ENCODE measurements at regions of chr11 and their contacts with region 1.

Region 1: DNA sequence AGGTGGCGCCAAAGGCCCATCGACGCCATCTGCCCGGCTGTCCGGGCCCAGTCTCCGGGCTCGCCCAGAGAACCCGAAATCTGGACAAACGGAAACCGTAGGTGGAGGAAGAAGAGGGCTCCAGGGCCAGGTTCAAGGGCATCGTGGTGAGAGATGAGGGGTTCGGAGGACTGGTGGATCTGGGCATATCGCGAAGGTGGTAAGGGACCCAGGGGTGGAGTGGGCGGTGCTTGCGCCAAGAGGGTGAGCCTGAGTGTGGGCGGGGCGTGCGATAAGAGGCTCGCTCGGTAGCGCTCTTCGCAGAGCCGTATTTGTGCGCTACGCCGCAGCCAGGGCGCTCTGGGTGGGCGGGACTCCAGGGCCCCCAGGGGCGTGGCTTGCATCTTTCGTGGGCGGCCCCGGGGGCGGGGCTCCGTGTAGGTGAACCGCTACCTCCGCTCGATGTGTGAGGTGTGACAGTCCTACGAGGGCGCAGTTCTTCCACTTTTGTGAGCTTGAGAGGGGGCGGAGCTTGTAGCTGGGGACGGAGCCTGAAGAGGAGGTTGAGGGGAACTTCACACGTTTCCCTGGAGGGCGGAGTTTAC is 4.8 kb downstream of the CD248 start:
- DNase-seq: peak; percentile 84
- H3K4me3 ChIP-seq: peak overlapping the region; percentile 74
- H3K27ac ChIP-seq: peak overlapping the region; percentile 89
- H3K27me3 ChIP-seq: peaks cover 7% of the 10 kb centered on the region
- CTCF ChIP-seq: peak; percentile 94

Region 2: DNA sequence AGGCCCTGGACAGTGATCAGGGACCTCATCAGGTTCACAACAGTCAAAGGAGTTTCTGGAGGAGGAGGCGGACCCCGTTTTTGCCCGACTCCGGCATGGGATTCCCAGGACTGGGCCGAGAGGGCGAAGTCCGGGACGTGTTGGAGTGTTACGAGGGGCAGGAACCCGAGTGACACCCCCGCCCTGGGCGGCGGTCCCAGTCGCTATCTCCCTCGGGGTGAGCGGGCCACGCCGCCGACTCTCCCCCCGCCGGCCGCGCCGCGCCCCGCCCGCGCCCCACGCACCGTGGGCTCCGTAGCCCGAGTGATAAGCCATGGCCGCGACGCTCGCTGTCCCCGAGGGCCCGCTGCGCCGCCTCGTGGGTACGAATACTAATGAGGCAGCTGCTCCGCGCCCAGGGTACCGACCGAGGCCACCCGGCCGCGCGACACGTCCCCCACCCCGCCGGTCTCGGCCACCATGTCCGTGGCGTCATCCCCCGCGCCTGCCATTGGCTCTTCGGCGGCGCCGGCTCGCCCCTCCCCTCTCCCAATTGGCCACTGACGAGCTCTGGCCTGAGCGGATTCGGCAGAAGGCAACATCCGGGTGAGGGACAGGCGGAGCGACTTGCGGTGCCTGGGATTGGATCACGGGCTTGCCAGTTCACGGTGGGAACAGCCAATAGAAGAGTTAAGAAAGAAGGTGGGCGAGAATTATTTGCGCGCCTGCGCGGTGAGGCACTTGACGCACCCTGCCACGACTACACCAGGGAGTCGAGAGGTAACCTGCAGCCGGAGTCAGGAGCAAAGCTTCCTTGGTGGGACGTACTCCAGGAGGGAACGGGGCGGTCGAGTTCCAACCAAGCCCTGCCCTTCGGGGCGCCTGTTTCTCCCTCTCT is 23.1 kb before region 1 on chr11 and contains the start of gene YIF1A:
- CTCF ChIA-PET with region 1: interaction called, 4 read pairs
- POLR2A ChIA-PET with region 1: interaction called, 25 read pairs
- DNase-seq: peak; percentile 99
- H3K4me3 ChIP-seq: peak within 1 kb of the TSS; percentile 84
- H3K27ac ChIP-seq: peak within 1 kb of the TSS; percentile 100
- H3K27me3 ChIP-seq: peaks cover 19% of the 10 kb centered on the region
- CTCF ChIP-seq: no peak
- polyA plus RNA-seq, gene YIF1A: 126 and 140 TPM in 2 replicates

Region 3: GRCh38 chr11:66328307-66329144 is 16.5 kb after region 1 on chr11:
- CTCF ChIA-PET with region 1: interaction called, 62 read pairs
- POLR2A ChIA-PET with region 1: interaction called, 99 read pairs
- DNase-seq: no peak
- H3K4me3 ChIP-seq: no peak overlapping the region
- H3K27ac ChIP-seq: peak overlapping the region; percentile 89
- H3K27me3 ChIP-seq: no peaks in the 10 kb centered on the region
- CTCF ChIP-seq: peak; percentile 94

Region 4: DNA sequence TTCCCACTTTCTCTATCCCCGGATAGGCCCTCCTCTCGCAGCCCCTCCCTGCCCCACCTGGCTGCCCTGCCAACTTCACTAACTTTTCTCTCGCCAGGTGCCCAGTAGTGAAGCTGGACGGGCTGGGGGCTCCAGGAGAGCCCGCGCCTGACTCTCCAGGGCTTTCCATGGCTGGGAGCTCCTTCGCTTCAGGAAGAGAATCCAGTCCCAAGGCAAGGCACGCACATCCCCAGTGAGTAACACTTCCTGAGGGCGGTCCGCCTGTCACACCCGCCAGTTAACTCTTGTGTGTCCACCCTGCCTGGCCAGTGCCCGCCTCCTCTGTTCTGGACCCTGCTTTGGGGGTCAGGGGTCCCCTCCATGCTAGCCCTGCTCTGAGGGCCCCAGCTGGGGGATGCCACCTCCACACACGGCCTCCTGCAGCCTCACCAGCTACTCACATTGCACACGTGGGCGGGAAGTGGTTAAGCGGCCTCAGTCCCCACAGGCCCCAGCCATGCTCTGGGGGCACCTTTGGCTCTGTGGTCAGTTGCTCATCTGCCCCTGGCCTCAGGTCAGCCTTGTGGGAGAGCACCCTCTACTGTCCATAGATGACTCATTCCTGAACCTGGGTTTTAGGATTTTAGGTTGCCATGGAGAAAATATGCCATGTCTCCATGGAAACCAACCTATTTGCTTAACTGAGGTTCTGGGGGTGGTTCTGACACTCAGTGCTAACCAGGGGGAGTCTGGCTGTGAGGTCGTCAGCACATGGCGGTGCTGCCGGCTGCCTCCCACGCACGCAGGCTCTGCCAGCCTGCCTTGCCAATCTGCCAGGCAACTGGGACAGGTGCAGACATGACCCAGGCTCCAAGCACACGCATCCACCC is 24.4 kb after region 1 on chr11 and contains the start of gene RIN1:
- CTCF ChIA-PET with region 1: interaction called, 64 read pairs
- POLR2A ChIA-PET with region 1: interaction called, 99 read pairs
- DNase-seq: peak; percentile 97
- H3K4me3 ChIP-seq: peak within 1 kb of the TSS; percentile 85
- H3K27ac ChIP-seq: peak within 1 kb of the TSS; percentile 97
- H3K27me3 ChIP-seq: no peaks in the 10 kb centered on the region
- CTCF ChIP-seq: peak; percentile 24; the same call in 1 of the 2 replicates
- polyA plus RNA-seq, gene RIN1: 6.7 and 9.0 TPM in 2 replicates

Region 5: GRCh38 chr11:66344550-66345315 is 32.7 kb after region 1 on chr11 and contains the start of gene BRMS1:
- CTCF ChIA-PET with region 1: interaction called, 12 read pairs
- POLR2A ChIA-PET with region 1: interaction called, 5 read pairs
- DNase-seq: peak; percentile 87
- H3K4me3 ChIP-seq: peak within 1 kb of the TSS; percentile 99
- H3K27ac ChIP-seq: peak within 1 kb of the TSS; percentile 65
- H3K27me3 ChIP-seq: no peaks in the 10 kb centered on the region
- CTCF ChIP-seq: peak; percentile 13
- polyA plus RNA-seq, gene BRMS1: 35.2 and 39.3 TPM in 2 replicates

Region 6: DNA sequence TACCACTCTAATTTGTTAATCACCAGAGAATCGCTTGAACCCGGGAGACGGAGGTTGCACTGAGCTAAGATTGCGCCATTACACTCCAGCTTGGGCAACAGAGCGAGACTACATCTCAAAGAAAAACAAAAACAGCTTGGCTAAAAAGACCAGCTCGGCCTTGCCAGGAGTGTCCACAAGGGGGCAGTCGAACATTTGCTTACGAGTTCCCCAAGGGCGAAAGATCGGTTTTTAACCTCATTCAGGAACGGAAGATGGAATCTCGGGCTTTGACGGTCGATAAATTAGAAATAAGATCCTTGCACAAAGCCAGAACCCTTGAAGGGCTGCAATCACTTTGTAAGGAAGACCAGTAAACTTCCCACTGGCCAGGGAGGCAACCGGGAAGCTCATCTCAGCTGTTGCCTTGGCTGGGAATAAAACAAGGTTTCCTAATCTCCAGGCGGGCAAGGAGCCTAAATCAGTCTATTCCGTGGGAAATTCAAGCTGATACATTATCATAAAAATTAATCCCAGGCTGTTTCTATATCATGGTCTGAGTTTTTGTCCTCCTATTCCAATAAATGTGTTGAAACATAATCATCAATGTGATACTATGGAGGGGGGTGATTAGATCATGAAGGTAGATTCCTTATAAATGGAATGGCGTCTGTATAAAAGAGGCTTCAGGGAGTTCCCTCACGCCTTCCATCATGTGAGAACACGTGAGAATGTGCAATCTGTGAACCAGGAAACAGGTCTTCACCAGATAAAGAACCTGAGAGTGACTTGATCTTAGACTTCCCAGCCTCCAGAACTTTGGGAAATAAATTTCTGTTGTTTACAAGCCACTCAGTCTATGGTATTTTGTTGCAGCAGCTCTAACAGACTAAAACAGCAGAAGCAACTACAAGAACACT is 74.4 kb after region 1 on chr11:
- CTCF ChIA-PET with region 1: interaction called, 98 read pairs
- POLR2A ChIA-PET with region 1: no interaction called
- DNase-seq: peak; percentile 66
- H3K4me3 ChIP-seq: peak overlapping the region; percentile 41
- H3K27ac ChIP-seq: no peak overlapping the region
- H3K27me3 ChIP-seq: no peaks in the 10 kb centered on the region
- CTCF ChIP-seq: peak; percentile 95

Measured in AG04450 (cell line).